ENCODE measurements at regions of chr1 and their contacts with region 1.

Region 1: DNA sequence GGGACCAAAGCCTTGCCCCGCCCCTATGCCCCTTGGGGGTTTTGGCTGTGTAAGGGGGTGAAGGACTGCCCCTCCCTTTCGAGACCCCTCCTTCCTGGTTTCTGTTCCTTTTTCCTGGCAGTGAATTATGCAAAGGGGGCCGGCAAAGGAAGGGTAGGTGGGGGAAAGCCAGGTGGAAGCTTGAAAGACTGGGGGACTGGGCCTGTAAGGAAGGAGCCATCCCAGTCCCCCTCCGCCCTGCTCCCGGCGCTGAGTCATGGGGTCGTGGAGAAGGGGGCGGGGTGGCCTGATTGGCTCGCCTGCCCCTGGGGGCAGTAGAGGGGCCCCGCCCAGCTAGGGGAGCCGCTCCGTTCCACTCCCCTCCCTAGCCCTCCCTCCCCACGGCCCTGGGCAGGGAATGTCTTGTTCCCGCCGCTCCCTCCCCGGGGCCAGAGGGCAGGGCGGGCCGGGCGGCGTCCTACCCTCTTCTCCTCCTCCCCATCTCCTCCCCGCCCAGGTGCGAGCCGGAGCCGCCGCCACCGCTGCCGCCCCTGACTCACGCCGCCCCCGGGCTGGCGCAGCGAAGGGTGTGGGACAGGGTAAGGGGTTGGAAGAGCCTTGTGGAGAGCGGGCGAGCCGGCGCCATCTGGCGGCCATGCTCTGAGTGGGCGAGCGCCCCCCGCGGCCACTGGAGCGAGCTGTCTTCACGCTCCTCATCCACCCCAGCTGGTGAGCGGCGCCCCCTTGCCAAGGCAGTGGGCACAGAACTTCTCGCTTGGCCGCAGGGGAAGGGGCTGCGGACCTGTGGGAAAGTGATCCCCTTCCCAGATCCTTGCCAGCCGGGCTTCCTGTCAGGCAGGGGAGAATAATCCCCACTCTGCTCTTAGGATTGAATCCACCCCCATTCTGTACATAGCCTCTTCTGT is 14.7 kb downstream of the ZBTB7B start:
- DNase-seq: peak in 1 of 2 donors; percentile 97
- H3K4me3 ChIP-seq: peak overlapping the region; percentile 34 to 54
- H3K27ac ChIP-seq: peak overlapping the region; percentile 99
- H3K4me1 ChIP-seq: peaks cover 66% of the 10 kb centered on the region
- H3K27me3 ChIP-seq: no peaks in the 10 kb centered on the region
- CTCF ChIP-seq: peak; percentile 95 to 98 (median 98)
- POLR2A ChIP-seq: peak in 1 of 2 donors; percentile 16

Region 2: GRCh38 chr1:154961497-154962262 is 55.6 kb before region 1 on chr1 and contains the start of gene PYGO2:
- intact Hi-C with region 1: loop called (anchors 5 kb)
- DNase-seq: no peak
- H3K4me3 ChIP-seq: peak within 1 kb of the TSS; percentile 73 to 91
- H3K27ac ChIP-seq: peak within 1 kb of the TSS; percentile 97
- H3K4me1 ChIP-seq: peaks cover 42% of the 10 kb centered on the region
- H3K27me3 ChIP-seq: no peaks in the 10 kb centered on the region
- CTCF ChIP-seq: peak; percentile 56 to 72 (median 70)
- POLR2A ChIP-seq: peak in 1 of 2 donors; percentile 42
- total RNA-seq, gene PYGO2: 19.2 TPM

Region 3: GRCh38 chr1:155070721-155071569 is 53.7 kb after region 1 on chr1:
- intact Hi-C with region 1: no loop called
- DNase-seq: no peak
- H3K4me3 ChIP-seq: peak overlapping the region; percentile 42 to 50
- H3K27ac ChIP-seq: peak overlapping the region; percentile 66
- H3K4me1 ChIP-seq: peaks cover 31% of the 10 kb centered on the region
- H3K27me3 ChIP-seq: no peaks in the 10 kb centered on the region
- CTCF ChIP-seq: peak in 1 of 3 experiments; percentile 22
- POLR2A ChIP-seq: no peak

Measured in vagina (tissue), 2 donors.